ENCODE measurements at regions of chr3 and their contacts with region 1.

Region 1: DNA sequence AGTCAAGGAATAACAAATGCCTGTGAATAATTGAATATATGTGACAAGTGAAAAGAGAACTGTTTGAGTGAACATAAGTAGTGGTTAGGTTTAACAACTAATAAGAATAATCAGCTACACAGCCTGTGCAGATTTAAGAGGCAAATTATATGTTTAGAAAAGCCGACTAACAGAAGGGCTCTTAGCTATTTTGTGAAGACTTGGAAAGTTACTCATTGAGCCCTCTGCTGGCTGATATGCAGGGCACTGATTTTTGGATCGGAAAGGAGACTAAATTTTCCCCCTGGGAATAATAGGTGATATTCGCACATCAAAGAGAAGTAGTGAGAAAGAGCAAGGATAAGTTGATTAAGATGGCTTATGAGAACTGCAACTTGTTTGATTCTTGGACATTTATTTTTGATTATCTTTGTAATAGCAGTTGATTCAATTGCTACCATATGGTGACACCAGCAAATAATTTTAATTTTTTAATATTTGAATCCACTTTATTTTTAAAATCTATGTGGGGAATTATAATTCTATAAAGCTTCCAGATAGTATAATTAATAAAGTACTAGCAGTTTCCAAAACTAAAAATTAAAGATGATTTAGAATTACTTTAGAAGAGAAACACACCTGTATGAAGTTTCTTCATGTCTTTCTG is 156.2 kb downstream of the NLGN1 start:
- DNase-seq: peak in 1 of 2 experiments; percentile 27
- H3K4me3 ChIP-seq: no peak overlapping the region
- H3K4me3 Mint-ChIP-seq: no peak overlapping the region
- H3K27ac Mint-ChIP-seq: no peak overlapping the region
- H3K4me1 ChIP-seq: no peaks in the 10 kb centered on the region
- H3K4me1 Mint-ChIP-seq: no peaks in the 10 kb centered on the region
- H3K27me3 ChIP-seq: no peaks in the 10 kb centered on the region
- H3K27me3 Mint-ChIP-seq: no peaks in the 10 kb centered on the region
- CTCF ChIP-seq: peak; percentile 55 to 71

Region 2: DNA sequence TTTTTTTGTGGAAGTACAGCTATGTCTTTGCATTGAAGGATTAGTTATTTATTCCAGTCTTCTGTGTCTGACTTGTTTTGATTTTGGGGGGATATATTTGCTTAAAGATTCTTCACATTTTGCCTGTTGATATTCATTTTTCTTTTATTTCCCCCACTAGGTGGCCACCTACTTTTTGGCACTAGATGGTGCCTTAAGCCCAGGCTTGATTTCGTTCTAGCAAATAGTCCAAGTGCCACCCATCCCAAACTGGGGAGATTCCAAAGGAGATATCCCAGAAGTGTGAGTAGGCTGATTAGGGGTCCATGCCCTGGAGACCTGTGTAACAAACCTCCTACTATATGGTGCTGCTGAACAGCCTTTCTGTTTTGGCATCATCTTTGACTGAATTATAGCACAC is 332.7 kb before region 1 on chr3:
- CTCF ChIA-PET with region 1: no interaction called
- POLR2A ChIA-PET with region 1: no interaction called
- intact Hi-C with region 1: loop called (anchors 1 kb)
- DNase-seq: peak in 1 of 2 experiments; percentile 14
- H3K4me3 ChIP-seq: no peak overlapping the region
- H3K4me3 Mint-ChIP-seq: no peak overlapping the region
- H3K27ac Mint-ChIP-seq: no peak overlapping the region
- H3K4me1 ChIP-seq: no peaks in the 10 kb centered on the region
- H3K4me1 Mint-ChIP-seq: no peaks in the 10 kb centered on the region
- H3K27me3 ChIP-seq: no peaks in the 10 kb centered on the region
- H3K27me3 Mint-ChIP-seq: no peaks in the 10 kb centered on the region
- CTCF ChIP-seq: peak in 1 of 2 experiments; percentile 59

Region 3: GRCh38 chr3:173371848-173372487 is 181.8 kb before region 1 on chr3:
- CTCF ChIA-PET with region 1: no interaction called
- POLR2A ChIA-PET with region 1: no interaction called
- intact Hi-C with region 1: loop called (anchors 1 kb)
- DNase-seq: peak in 1 of 2 experiments; percentile 35
- H3K4me3 ChIP-seq: no peak overlapping the region
- H3K4me3 Mint-ChIP-seq: no peak overlapping the region
- H3K27ac Mint-ChIP-seq: no peak overlapping the region
- H3K4me1 ChIP-seq: no peaks in the 10 kb centered on the region
- H3K4me1 Mint-ChIP-seq: no peaks in the 10 kb centered on the region
- H3K27me3 ChIP-seq: no peaks in the 10 kb centered on the region
- H3K27me3 Mint-ChIP-seq: peaks cover 14% of the 10 kb centered on the region
- CTCF ChIP-seq: peak; percentile 54 to 55

Region 4: GRCh38 chr3:173411375-173411973 is 142.3 kb before region 1 on chr3:
- CTCF ChIA-PET with region 1: no interaction called
- POLR2A ChIA-PET with region 1: no interaction called
- intact Hi-C with region 1: loop called (anchors 1 kb)
- DNase-seq: no peak
- H3K4me3 ChIP-seq: no peak overlapping the region
- H3K4me3 Mint-ChIP-seq: no peak overlapping the region
- H3K27ac Mint-ChIP-seq: no peak overlapping the region
- H3K4me1 ChIP-seq: no peaks in the 10 kb centered on the region
- H3K4me1 Mint-ChIP-seq: no peaks in the 10 kb centered on the region
- H3K27me3 ChIP-seq: no peaks in the 10 kb centered on the region
- H3K27me3 Mint-ChIP-seq: peaks cover 15% of the 10 kb centered on the region
- CTCF ChIP-seq: peak in 1 of 2 experiments; percentile 21

Region 5: DNA sequence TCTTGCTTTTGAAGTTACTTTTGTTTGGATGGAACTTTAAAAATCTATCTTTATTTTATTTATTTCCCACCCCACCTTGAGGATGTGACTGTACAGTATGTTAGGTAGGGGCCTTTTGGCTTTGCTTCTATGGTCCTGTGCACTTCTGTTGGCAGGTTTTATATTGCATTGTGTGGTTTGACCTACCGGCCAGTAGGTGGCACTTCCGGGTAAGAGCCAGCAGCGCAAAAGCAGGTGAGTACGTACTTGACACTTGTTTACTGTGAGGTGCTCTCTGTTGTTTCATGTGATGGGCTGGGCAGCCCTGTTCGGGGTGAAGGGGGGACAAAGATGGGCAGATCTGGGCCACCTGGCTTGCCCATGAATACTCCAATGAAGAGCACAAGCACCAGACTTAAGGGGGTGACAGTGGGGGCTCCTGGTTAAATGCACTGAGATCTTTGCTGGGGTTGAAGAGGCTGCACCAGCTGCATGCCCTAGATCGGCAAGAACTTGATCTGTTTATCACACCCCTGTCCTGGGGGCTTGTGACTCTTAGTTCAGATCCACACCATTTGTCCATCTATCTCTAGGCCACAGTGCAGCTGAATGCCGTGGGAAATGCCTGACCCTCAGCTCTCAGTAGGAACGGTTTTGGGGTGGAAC is 24.6 kb before region 1 on chr3:
- CTCF ChIA-PET with region 1: no interaction called
- POLR2A ChIA-PET with region 1: no interaction called
- intact Hi-C with region 1: loop called (anchors 1 kb)
- DNase-seq: peak; percentile 29 to 39
- H3K4me3 ChIP-seq: no peak overlapping the region
- H3K4me3 Mint-ChIP-seq: no peak overlapping the region
- H3K27ac Mint-ChIP-seq: no peak overlapping the region
- H3K4me1 ChIP-seq: no peaks in the 10 kb centered on the region
- H3K4me1 Mint-ChIP-seq: no peaks in the 10 kb centered on the region
- H3K27me3 ChIP-seq: no peaks in the 10 kb centered on the region
- H3K27me3 Mint-ChIP-seq: peaks cover 7% of the 10 kb centered on the region
- CTCF ChIP-seq: peak; percentile 63 to 70

Region 6: DNA sequence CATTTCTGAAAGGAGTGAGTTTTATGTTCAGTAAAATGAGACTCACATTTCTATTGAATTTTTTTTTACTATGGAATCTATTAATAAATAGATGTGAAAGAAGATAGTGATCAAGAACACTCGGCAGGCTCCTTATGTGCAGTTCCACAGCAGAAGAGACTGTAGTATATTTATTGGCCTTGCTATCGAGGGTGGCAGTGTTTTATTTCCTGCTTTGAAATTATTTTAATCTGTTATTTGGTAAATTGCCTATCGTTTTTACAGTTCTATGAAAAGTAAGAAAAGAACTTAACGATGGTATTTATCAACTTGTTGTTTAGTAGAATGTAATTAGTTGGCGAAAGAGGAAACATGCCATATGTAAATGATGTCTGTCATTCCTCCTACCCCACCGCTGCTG is 82.1 kb after region 1 on chr3:
- CTCF ChIA-PET with region 1: no interaction called
- POLR2A ChIA-PET with region 1: no interaction called
- intact Hi-C with region 1: no loop called
- DNase-seq: no peak
- H3K4me3 ChIP-seq: no peak overlapping the region
- H3K4me3 Mint-ChIP-seq: no peak overlapping the region
- H3K27ac Mint-ChIP-seq: no peak overlapping the region
- H3K4me1 ChIP-seq: no peaks in the 10 kb centered on the region
- H3K4me1 Mint-ChIP-seq: no peaks in the 10 kb centered on the region
- H3K27me3 ChIP-seq: no peaks in the 10 kb centered on the region; the same call in 1 of the 2 replicates
- H3K27me3 Mint-ChIP-seq: peaks cover 2% of the 10 kb centered on the region
- CTCF ChIP-seq: no peak